CD8-positive, alpha-beta memory T cell (primary cell): ENCODE measurements at regions of chr2 and their contacts with region 1.

Region 1: GRCh38 chr2:85595301-85596025 is at the start of gene RNF181:
- DNase-seq: peak; percentile 80 to 94 (median 90)
- H3K4me3 ChIP-seq: peak within 1 kb of the TSS; percentile 87
- H3K4me3 Mint-ChIP-seq: peak within 1 kb of the TSS; percentile 96 to 99 (median 98)
- H3K27ac ChIP-seq: peak within 1 kb of the TSS; percentile 84
- H3K27ac Mint-ChIP-seq: peak within 1 kb of the TSS; percentile 81 to 99 (median 95)
- H3K4me1 ChIP-seq: peaks cover 22% of the 10 kb centered on the region
- H3K4me1 Mint-ChIP-seq: peaks cover 34 to 52% (median 35%) of the 10 kb centered on the region in 3 donors
- H3K27me3 ChIP-seq: no peaks in the 10 kb centered on the region
- H3K27me3 Mint-ChIP-seq: no peaks in the 10 kb centered on the region
- total RNA-seq, gene RNF181: 88.2 to 95.1 TPM

Region 2: GRCh38 chr2:85327822-85328617 is 267.4 kb before region 1 on chr2 and contains the start of gene TGOLN2:
- CTCF ChIA-PET with region 1: no interaction called
- POLR2A ChIA-PET with region 1: interaction called, 10 read pairs
- DNase-seq: peak; percentile 90 to 96 (median 94)
- H3K4me3 ChIP-seq: peak within 1 kb of the TSS; percentile 86
- H3K4me3 Mint-ChIP-seq: peak within 1 kb of the TSS; percentile 92 to 100 (median 99)
- H3K27ac ChIP-seq: peak within 1 kb of the TSS; percentile 98
- H3K27ac Mint-ChIP-seq: peak within 1 kb of the TSS; percentile 94 to 100 (median 99)
- H3K4me1 ChIP-seq: peaks cover 34% of the 10 kb centered on the region
- H3K4me1 Mint-ChIP-seq: peaks cover 37 to 48% (median 44%) of the 10 kb centered on the region in 3 donors
- H3K27me3 ChIP-seq: no peaks in the 10 kb centered on the region
- H3K27me3 Mint-ChIP-seq: peaks cover 0 to 1% of the 10 kb centered on the region in 2 donors
- total RNA-seq, gene TGOLN2: 93.4 to 95.6 TPM

Region 3: DNA sequence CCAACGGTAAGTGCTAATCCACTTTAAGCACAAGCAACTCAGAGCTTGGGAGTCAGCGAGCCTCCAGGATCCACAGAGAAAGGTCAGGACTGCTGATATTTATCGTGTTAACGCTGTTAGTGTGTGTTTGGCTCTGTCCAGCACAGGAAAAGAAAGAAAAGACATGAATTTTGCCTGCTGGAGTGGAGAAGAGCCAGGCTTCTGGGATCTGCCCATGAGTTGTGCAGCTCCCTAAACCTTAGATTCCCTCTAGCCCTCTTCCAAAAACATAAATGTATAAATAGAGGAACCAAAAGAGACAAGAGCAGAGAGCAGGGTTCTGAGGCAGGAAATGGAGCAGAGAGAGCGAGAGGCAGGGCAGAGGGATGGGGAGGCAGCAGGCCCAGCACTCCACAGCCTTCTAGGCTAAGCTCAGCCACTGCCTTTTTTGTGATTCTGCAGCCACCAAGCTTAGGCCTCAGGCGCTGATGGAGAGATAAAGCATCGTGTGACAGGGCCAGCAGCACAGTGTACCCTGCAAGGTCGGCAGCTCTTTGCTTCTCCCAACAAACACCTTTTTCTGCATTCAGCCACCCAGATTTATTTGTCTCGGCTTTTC is 71.0 kb before region 1 on chr2:
- CTCF ChIA-PET with region 1: no interaction called
- POLR2A ChIA-PET with region 1: no interaction called
- DNase-seq: no peak
- H3K4me3 ChIP-seq: no peak overlapping the region
- H3K4me3 Mint-ChIP-seq: no peak overlapping the region
- H3K27ac ChIP-seq: peak overlapping the region; percentile 24
- H3K27ac Mint-ChIP-seq: no peak overlapping the region
- H3K4me1 ChIP-seq: no peaks in the 10 kb centered on the region
- H3K4me1 Mint-ChIP-seq: no peaks in the 10 kb centered on the region
- H3K27me3 ChIP-seq: no peaks in the 10 kb centered on the region
- H3K27me3 Mint-ChIP-seq: peaks cover 3 to 27% of the 10 kb centered on the region in 2 donors

Region 4: DNA sequence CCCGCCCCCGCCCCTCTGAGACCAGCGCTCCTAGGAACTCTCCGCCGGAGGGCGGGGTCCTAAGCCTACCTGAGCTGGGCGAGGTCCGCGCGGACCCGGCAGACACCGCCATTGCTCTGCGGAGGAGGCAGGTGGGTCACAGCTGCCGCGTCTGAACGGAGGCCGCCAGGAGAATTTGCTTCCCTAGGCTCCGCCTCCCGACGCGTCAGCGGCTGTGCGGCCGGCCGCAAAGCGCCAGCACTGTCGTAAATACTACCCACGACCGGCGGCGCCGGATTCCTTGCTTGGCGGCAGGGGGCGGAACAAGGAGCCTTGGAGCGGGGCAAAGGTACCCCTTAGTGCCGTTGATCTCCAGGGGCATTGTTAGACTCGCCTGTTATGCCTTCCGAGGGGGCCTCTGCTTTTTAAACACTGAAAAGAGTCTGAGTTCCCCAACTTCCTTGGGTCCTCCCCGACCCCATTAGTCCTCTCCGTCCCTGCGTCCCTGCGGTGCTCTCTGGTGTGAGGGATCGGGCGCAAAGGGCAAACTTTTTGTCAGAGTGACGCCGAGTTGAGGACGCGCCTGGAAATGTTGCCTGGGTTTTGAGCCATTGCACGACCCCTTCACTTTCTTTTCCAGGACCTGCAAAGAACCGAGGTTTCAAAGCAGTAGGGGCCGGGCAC is 34.0 kb before region 1 on chr2 and contains the start of gene GGCX:
- CTCF ChIA-PET with region 1: interaction called, 3 read pairs
- POLR2A ChIA-PET with region 1: interaction called, 13 read pairs
- DNase-seq: peak; percentile 86 to 95 (median 91)
- H3K4me3 ChIP-seq: peak within 1 kb of the TSS; percentile 87
- H3K4me3 Mint-ChIP-seq: peak within 1 kb of the TSS; percentile 95 to 98 (median 97)
- H3K27ac ChIP-seq: peak within 1 kb of the TSS; percentile 88
- H3K27ac Mint-ChIP-seq: peak within 1 kb of the TSS; percentile 90 to 98 (median 96)
- H3K4me1 ChIP-seq: peaks cover 12% of the 10 kb centered on the region
- H3K4me1 Mint-ChIP-seq: peaks cover 27 to 31% (median 30%) of the 10 kb centered on the region in 3 donors
- H3K27me3 ChIP-seq: no peaks in the 10 kb centered on the region
- H3K27me3 Mint-ChIP-seq: no peaks in the 10 kb centered on the region
- total RNA-seq, gene GGCX: 22.3 to 23.3 TPM

Region 5: GRCh38 chr2:85611705-85612587 is 16.5 kb after region 1 on chr2 and contains the start of gene C2orf68:
- CTCF ChIA-PET with region 1: interaction called, 8 read pairs
- POLR2A ChIA-PET with region 1: interaction called, 21 read pairs
- DNase-seq: peak; percentile 76 to 87 (median 78)
- H3K4me3 ChIP-seq: peak within 1 kb of the TSS; percentile 91
- H3K4me3 Mint-ChIP-seq: peak within 1 kb of the TSS; percentile 90 to 99 (median 96)
- H3K27ac ChIP-seq: peak within 1 kb of the TSS; percentile 68
- H3K27ac Mint-ChIP-seq: peak within 1 kb of the TSS; percentile 88 to 98 (median 94)
- H3K4me1 ChIP-seq: peaks cover 24% of the 10 kb centered on the region
- H3K4me1 Mint-ChIP-seq: peaks cover 23 to 51% (median 42%) of the 10 kb centered on the region in 3 donors
- H3K27me3 ChIP-seq: no peaks in the 10 kb centered on the region
- H3K27me3 Mint-ChIP-seq: peaks cover 0 to 4% of the 10 kb centered on the region in 2 donors
- total RNA-seq, gene C2orf68: 26.7 to 27.3 TPM

Region 6: GRCh38 chr2:85635636-85636035 is 40.2 kb after region 1 on chr2:
- CTCF ChIA-PET with region 1: interaction called, 16 read pairs
- POLR2A ChIA-PET with region 1: no interaction called
- DNase-seq: no peak
- H3K4me3 ChIP-seq: no peak overlapping the region
- H3K4me3 Mint-ChIP-seq: no peak overlapping the region
- H3K27ac ChIP-seq: no peak overlapping the region
- H3K27ac Mint-ChIP-seq: peak overlapping the region in 3 of 8 donors; percentile 3 to 84 (median 27)
- H3K4me1 ChIP-seq: no peaks in the 10 kb centered on the region
- H3K4me1 Mint-ChIP-seq: peaks cover 20 to 27% (median 26%) of the 10 kb centered on the region in 3 donors
- H3K27me3 ChIP-seq: no peaks in the 10 kb centered on the region
- H3K27me3 Mint-ChIP-seq: no peaks in the 10 kb centered on the region